OCI-LY7 (cell line): ENCODE measurements at regions of chr11 and their contacts with region 1.

Region 1: GRCh38 chr11:84780689-84781293 is 846.4 kb downstream of the DLG2 start:
- DNase-seq: peak; percentile 31
- H3K4me3 ChIP-seq: no peak overlapping the region
- H3K27ac ChIP-seq: no peak overlapping the region
- H3K4me1 ChIP-seq: no peaks in the 10 kb centered on the region
- CTCF ChIP-seq: peak; percentile 77

Region 2: GRCh38 chr11:84686716-84687115 is 94.1 kb before region 1 on chr11:
- CTCF ChIA-PET with region 1: no interaction called
- POLR2A ChIA-PET with region 1: no interaction called
- intact Hi-C with region 1: no loop called
- DNase-seq: no peak
- H3K4me3 ChIP-seq: no peak overlapping the region
- H3K27ac ChIP-seq: no peak overlapping the region
- H3K4me1 ChIP-seq: no peaks in the 10 kb centered on the region
- CTCF ChIP-seq: no peak

Region 3: GRCh38 chr11:84740050-84740449 is 40.7 kb before region 1 on chr11:
- CTCF ChIA-PET with region 1: no interaction called
- POLR2A ChIA-PET with region 1: no interaction called
- intact Hi-C with region 1: no loop called
- DNase-seq: no peak
- H3K4me3 ChIP-seq: no peak overlapping the region
- H3K27ac ChIP-seq: no peak overlapping the region
- H3K4me1 ChIP-seq: peaks cover 6% of the 10 kb centered on the region
- CTCF ChIP-seq: no peak

Region 4: DNA sequence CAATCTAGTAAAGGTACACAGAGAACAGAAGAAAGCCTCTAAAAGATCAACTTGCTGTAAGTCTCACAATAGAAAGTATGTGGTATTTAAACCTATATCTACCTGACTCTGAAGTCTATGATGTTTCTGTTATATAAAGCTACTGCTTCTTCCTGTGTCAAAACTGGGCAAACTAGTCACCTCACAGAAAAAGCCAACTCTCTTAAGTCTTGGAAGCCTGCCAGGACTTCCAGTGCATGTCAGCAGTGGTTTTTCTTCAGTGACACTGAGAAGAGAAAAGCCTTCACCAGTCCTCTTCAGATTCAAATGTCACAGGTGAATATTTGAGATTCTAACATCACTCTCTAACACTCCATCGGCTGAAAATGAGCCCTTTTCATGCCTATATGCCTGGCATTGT is 38.3 kb after region 1 on chr11:
- CTCF ChIA-PET with region 1: no interaction called
- POLR2A ChIA-PET with region 1: no interaction called
- intact Hi-C with region 1: no loop called
- DNase-seq: no peak
- H3K4me3 ChIP-seq: no peak overlapping the region
- H3K27ac ChIP-seq: no peak overlapping the region
- H3K4me1 ChIP-seq: no peaks in the 10 kb centered on the region
- CTCF ChIP-seq: no peak

Region 5: GRCh38 chr11:84833488-84834088 is 52.8 kb after region 1 on chr11:
- CTCF ChIA-PET with region 1: no interaction called
- POLR2A ChIA-PET with region 1: no interaction called
- intact Hi-C with region 1: no loop called
- DNase-seq: no peak
- H3K4me3 ChIP-seq: no peak overlapping the region
- H3K27ac ChIP-seq: no peak overlapping the region
- H3K4me1 ChIP-seq: no peaks in the 10 kb centered on the region
- CTCF ChIP-seq: no peak

Region 6: DNA sequence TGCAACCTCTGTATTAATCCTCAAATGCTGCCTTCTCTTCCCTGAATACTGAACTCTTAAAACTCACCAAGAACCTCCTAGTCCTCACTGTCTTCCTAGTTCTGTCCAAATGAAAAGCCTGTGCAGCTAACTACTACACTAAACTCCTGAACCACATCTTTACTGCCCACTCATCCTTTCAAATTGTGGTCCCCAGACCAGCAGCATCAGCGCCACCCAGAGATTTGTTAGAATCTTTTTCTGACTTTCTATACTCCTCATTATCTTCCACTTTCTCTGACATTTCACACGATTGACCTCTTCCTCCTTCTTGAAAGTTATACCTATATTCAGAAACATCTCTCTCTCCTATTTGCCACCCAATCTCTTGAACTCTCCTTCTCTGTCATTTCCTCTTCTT is 385.0 kb after region 1 on chr11:
- CTCF ChIA-PET with region 1: no interaction called
- POLR2A ChIA-PET with region 1: no interaction called
- intact Hi-C with region 1: loop called (anchors 5 kb)
- DNase-seq: no peak
- H3K4me3 ChIP-seq: no peak overlapping the region
- H3K27ac ChIP-seq: no peak overlapping the region
- H3K4me1 ChIP-seq: no peaks in the 10 kb centered on the region
- CTCF ChIP-seq: peak; percentile 40